GM12878 (cell line): ENCODE measurements at regions of chr17 and their contacts with region 1.

Region 1: DNA sequence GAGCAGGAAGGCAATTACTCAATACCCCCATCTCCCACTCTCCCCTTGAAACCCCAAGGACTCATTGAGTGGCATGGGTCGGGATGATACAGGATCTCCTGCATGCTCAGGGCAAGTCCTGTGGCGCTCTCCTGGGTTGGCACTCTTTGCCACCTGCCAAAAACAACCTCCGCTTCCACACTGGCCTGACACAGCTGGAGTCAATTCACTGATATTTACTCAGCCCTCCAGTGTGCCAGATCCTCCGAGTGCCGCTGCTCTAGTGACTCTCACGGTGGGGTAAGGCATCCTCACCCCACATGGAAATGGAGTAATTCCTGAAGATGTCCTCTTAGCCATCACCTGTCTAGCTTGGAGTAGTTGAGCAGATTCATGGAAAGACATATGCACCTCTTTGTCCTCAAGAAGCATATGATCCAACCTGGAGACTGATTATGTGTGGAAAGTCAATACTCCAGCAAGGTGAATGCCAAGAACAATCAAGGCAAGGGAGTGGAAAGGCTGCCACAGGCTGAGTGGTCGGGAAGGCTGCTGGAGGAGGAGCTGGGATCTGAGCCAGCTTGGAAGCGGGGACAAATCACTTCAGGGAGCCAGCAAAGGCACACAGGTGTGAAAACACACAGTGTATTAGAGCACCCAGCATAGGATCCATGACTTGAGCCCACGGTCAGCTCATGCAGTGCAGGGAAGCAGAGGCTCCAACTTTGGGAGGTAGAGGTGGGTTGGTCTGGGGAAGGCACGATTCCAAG is 12.6 kb upstream of the GOSR2 start:
- DNase-seq: no peak
- ATAC-seq: no peak
- H3K4me3 ChIP-seq: no peak overlapping the region
- H3K27ac ChIP-seq: no peak overlapping the region
- H3K4me1 ChIP-seq: no peaks in the 10 kb centered on the region
- H3K27me3 ChIP-seq: peaks cover 0 to 2% of the 10 kb centered on the region in 2 experiments; a peak in 1 of 4 replicates
- CTCF ChIP-seq: no peak
- EP300 ChIP-seq: no peak
- POLR2A ChIP-seq: no peak
- RAD21 ChIP-seq: no peak

Region 2: DNA sequence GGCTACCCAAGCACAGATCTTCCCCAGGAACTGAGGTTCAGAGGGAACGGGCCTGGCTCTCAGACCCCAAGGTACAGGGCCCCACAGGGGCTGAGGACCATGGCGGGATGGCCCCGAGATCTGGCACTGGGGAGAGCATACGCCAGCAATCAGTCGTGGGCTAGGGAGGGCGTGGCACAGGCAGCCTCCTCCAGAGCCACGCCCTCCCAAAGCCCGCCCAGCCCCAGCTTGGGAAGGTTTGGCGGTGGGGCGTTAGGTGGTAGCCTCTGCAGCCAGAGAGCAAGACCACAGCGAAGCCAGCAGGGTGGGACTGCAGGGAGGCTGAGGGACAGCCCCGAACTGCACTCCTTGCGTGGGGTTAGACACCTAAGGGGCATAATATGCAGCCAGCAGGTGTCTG is 47.4 kb before region 1 on chr17:
- CTCF ChIA-PET with region 1: no interaction called
- POLR2A ChIA-PET with region 1: no interaction called
- RAD21 ChIA-PET with region 1: no interaction called
- SMC1A ChIA-PET with region 1: no interaction called
- in situ Hi-C with region 1: loop called (anchors 5 kb)
- intact Hi-C with region 1: no loop called
- DNase-seq: no peak
- ATAC-seq: no peak
- H3K4me3 ChIP-seq: no peak overlapping the region
- H3K27ac ChIP-seq: no peak overlapping the region
- H3K4me1 ChIP-seq: no peaks in the 10 kb centered on the region
- H3K27me3 ChIP-seq: peaks cover 0 to 2% of the 10 kb centered on the region in 2 experiments; a peak in 2 of 4 replicates
- CTCF ChIP-seq: no peak
- EP300 ChIP-seq: no peak
- POLR2A ChIP-seq: no peak
- RAD21 ChIP-seq: no peak

Region 3: GRCh38 chr17:46876353-46876887 is 33.9 kb before region 1 on chr17:
- CTCF ChIA-PET with region 1: no interaction called
- POLR2A ChIA-PET with region 1: no interaction called
- RAD21 ChIA-PET with region 1: no interaction called
- SMC1A ChIA-PET with region 1: no interaction called
- in situ Hi-C with region 1: no loop called
- intact Hi-C with region 1: no loop called
- DNase-seq: no peak
- ATAC-seq: peak; percentile 93
- H3K4me3 ChIP-seq: no peak overlapping the region
- H3K27ac ChIP-seq: no peak overlapping the region
- H3K4me1 ChIP-seq: no peaks in the 10 kb centered on the region
- H3K27me3 ChIP-seq: no peaks in the 10 kb centered on the region
- CTCF ChIP-seq: peak; percentile 40 to 48 (median 46)
- EP300 ChIP-seq: no peak
- POLR2A ChIP-seq: no peak
- RAD21 ChIP-seq: no peak

Region 4: DNA sequence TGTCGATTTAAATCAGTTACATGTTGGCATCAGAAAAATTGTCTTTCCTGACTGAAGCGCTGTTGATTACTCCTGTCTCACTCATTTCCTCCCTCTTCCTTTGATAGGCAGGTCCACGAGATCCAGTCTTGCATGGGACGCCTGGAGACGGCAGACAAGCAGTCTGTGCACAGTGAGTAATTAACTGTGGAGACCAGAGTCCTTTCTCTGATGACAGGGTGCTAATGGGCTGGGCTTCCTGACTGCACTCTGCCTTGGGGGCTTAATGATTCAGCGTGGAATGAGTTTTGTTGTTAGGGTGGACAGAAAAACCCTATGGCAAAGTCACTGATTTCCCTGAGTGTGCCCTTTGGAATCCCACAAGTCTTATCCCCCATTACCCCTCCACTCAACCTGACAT is 19.1 kb after region 1 on chr17:
- CTCF ChIA-PET with region 1: no interaction called
- POLR2A ChIA-PET with region 1: no interaction called
- RAD21 ChIA-PET with region 1: no interaction called
- SMC1A ChIA-PET with region 1: no interaction called
- in situ Hi-C with region 1: no loop called
- intact Hi-C with region 1: no loop called
- DNase-seq: no peak
- ATAC-seq: no peak
- H3K4me3 ChIP-seq: no peak overlapping the region
- H3K27ac ChIP-seq: no peak overlapping the region
- H3K4me1 ChIP-seq: 0 out of 2 replicates have a peak, but pooled peaks cover 4% of the 10 kb centered on the region
- H3K27me3 ChIP-seq: no peaks in the 10 kb centered on the region
- CTCF ChIP-seq: no peak
- EP300 ChIP-seq: no peak
- POLR2A ChIP-seq: no peak
- RAD21 ChIP-seq: no peak